ENCODE measurements at regions of chr10 and their contacts with region 1.

Region 1: GRCh38 chr10:5948999-5949759 is 28.2 kb downstream of the IL15RA start:
- DNase-seq: peak; percentile 74 to 75
- H3K4me3 ChIP-seq: no peak overlapping the region
- H3K4me3 Mint-ChIP-seq: no peak overlapping the region
- H3K27ac Mint-ChIP-seq: no peak overlapping the region
- H3K4me1 ChIP-seq: peaks cover 3% of the 10 kb centered on the region; the same call in 1 of the 2 replicates
- H3K4me1 Mint-ChIP-seq: peaks cover 11% of the 10 kb centered on the region
- H3K27me3 ChIP-seq: no peaks in the 10 kb centered on the region
- H3K27me3 Mint-ChIP-seq: no peaks in the 10 kb centered on the region
- CTCF ChIP-seq: peak; percentile 41 to 82

Region 2: DNA sequence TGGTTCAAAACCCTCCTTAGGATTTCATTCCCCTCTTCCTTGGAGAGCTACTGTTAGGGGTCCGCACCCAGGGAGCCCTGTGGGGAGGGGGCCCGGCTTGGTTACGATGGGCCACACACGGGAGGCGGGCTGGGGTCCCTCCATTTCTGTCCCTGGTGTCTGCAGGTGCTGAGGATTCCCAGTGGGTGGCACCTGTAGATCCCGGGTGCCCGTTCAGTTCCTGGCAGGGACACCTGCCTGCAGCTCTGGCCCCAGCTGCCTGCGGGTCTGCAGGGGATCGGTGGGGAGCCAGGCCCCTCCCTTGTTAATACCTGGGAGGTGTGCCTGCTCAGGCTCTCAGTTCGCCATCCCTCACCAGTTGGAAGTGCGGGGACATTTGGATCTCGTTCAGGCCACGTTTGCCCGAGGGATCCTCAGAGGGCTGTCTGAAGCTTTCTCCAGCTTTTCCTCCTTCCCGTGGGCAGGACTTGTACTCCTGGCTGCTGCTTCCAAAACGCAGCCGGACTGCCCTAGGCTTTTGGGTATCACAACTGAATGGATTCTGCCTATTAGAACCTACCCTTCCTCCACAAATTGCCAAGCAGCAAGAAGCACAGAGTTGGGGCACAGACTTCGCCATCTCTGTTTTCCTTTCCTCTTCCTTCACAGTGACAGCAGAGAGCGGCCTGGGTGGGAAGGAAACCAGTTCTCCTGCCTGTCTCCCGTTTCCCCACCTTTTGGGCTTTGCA is 50.4 kb after region 1 on chr10:
- CTCF ChIA-PET with region 1: no interaction called
- POLR2A ChIA-PET with region 1: no interaction called
- intact Hi-C with region 1: no loop called
- DNase-seq: no peak
- H3K4me3 ChIP-seq: no peak overlapping the region
- H3K4me3 Mint-ChIP-seq: no peak overlapping the region
- H3K27ac Mint-ChIP-seq: no peak overlapping the region
- H3K4me1 ChIP-seq: no peaks in the 10 kb centered on the region
- H3K4me1 Mint-ChIP-seq: no peaks in the 10 kb centered on the region
- H3K27me3 ChIP-seq: no peaks in the 10 kb centered on the region
- H3K27me3 Mint-ChIP-seq: peaks cover 41% of the 10 kb centered on the region
- CTCF ChIP-seq: no peak

Region 3: DNA sequence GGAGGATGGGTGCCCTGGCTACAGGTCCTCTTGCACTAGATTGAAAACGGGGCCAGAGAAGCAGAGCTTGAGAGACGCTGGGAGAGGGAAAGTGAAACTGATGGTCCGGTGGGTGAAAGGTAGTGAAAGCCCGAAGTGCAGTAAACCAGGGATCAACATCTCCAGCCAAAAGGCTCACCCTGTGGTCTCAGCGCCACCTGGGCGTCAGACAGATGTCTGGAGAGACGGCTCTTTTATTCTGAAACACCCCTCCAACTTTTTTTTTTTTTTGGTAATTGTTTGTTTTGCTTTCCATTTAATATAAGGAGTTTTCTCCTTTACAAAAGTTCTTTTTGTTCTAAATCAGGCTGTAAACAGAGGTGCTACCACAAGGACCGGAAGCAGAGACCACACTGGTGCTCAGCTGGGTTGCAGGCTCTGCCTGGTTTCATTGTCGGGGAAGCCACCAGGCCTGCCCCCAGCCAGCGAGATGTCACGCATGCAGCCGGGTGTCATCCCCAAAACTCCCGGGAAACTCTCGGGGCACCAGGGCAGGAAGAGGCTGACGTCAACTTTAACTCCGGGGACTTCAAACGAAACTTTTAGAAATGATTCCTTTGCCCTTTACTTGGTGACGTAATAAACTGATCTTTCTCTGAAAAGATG is 101.7 kb after region 1 on chr10:
- CTCF ChIA-PET with region 1: interaction called, 3 read pairs
- POLR2A ChIA-PET with region 1: no interaction called
- intact Hi-C with region 1: loop called (anchors 2 kb)
- DNase-seq: peak; percentile 64 to 68
- H3K4me3 ChIP-seq: no peak overlapping the region
- H3K4me3 Mint-ChIP-seq: peak overlapping the region; percentile 59
- H3K27ac Mint-ChIP-seq: no peak overlapping the region
- H3K4me1 ChIP-seq: no peaks in the 10 kb centered on the region
- H3K4me1 Mint-ChIP-seq: peaks cover 7% of the 10 kb centered on the region
- H3K27me3 ChIP-seq: 0 out of 2 replicates have a peak, but pooled peaks cover 1% of the 10 kb centered on the region
- H3K27me3 Mint-ChIP-seq: peaks cover 30% of the 10 kb centered on the region
- CTCF ChIP-seq: peak in 1 of 2 experiments; percentile 56